ENCODE measurements at regions of chr17 and their contacts with region 1.

Region 1: DNA sequence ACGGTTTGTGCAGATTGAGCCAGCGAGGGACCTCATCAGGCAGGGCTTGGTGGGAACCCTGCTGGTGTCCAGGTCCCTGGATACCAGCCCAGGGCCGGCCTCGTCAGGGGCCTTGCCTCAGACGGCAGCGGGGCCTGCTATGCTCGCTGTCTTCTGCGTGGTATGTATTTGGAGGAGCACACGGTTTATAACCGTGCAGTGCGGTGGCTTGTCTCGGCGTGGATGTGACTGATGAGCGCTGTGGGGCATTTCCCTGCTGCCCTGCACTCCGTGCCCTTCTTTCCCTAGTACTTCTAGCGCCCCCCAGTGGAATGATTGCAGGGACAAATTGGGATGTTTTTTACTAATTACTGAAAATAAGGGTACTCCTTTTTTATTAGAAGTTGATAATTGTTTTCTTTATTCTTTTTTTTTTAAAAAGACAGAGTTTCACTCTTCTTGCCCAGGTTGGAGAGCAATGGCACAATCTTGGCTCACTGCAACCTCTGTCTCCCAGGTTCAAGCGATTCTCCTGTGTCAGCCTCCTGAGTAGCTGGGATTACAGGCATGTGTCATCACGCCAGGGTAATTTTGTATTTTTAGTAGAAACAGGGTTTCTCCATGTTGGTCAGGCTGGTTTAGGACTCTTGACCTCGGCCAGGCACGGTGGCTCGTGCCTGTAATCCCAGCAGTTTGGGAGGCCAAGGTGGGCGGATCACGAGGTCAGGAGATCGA is 15.3 kb downstream of the TBCD start:
- DNase-seq: peak in 1 of 2 donors; percentile 30
- H3K4me3 ChIP-seq: no peak overlapping the region
- H3K27ac ChIP-seq: no peak overlapping the region
- H3K4me1 ChIP-seq: no peaks in the 10 kb centered on the region
- H3K27me3 ChIP-seq: no peaks in the 10 kb centered on the region
- CTCF ChIP-seq: peak in 3 of 6 experiments; percentile 22 to 44 (median 36)
- POLR2A ChIP-seq: no peak

Region 2: GRCh38 chr17:82668631-82669099 is 98.5 kb before region 1 on chr17:
- intact Hi-C with region 1: loop called (anchors 5 kb)
- DNase-seq: peak; percentile 72 to 80
- H3K4me3 ChIP-seq: no peak overlapping the region
- H3K27ac ChIP-seq: peak overlapping the region in 1 of 3 donors; percentile 57
- H3K4me1 ChIP-seq: peaks cover 4 to 16% of the 10 kb centered on the region in 2 donors
- H3K27me3 ChIP-seq: no peaks in the 10 kb centered on the region
- CTCF ChIP-seq: peak in 4 of 6 experiments; percentile 49 to 59 (median 54)
- POLR2A ChIP-seq: no peak

Region 3: GRCh38 chr17:82808921-82809905 is 42.0 kb after region 1 on chr17:
- intact Hi-C with region 1: no loop called
- DNase-seq: no peak
- H3K4me3 ChIP-seq: no peak overlapping the region
- H3K27ac ChIP-seq: no peak overlapping the region
- H3K4me1 ChIP-seq: no peaks in the 10 kb centered on the region
- H3K27me3 ChIP-seq: no peaks in the 10 kb centered on the region
- CTCF ChIP-seq: no peak
- POLR2A ChIP-seq: no peak

Region 4: GRCh38 chr17:82892899-82893565 is 125.8 kb after region 1 on chr17:
- intact Hi-C with region 1: no loop called
- DNase-seq: peak; percentile 96 to 97
- H3K4me3 ChIP-seq: no peak overlapping the region
- H3K27ac ChIP-seq: peak overlapping the region; percentile 76 to 92 (median 87)
- H3K4me1 ChIP-seq: peaks cover 66% of the 10 kb centered on the region in 2 donors
- H3K27me3 ChIP-seq: no peaks in the 10 kb centered on the region
- CTCF ChIP-seq: no peak
- POLR2A ChIP-seq: no peak

Measured in thyroid gland (tissue), 4 donors.